ENCODE measurements at regions of chr4 and their contacts with region 1.

Region 1: DNA sequence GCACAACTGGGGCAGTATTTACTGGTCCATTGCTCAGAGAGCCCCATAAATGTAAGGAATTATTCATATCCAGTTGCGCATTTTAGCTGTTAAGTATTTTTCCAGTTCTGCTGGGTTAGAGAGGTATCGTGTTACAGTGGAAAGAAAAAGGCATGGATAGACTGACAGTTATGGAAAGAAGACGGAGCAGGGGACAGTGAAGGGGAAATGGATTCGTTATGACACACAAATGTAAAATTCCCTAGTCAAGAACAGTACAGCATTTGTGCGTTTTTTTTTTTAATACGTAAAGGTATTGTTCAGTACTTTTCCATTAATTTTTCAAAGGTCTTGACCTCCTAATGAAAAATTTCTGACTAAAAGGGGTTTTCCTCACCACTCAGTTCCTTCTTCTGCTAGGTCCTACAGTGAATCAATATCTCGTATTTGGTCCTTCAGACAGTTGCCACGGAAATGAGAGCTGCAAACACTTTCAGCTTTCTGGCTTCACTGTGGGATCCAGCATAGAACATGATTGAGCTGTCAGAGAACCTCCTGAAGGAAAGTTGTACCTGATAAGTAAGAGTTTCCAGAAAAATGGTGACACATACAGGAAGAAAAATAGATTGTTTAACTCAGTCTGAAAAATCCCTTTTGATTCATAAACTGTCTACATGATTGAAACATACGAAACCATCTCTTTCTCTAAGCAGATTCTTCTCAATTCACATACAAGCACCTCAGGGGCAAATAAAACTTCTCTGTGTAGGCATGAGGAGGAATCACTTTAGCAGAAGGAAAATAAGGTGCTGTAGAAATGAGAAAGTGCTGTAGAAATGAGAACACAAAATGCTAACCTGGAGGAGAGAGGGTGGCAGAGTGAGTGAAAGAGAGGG is 21.8 kb upstream of the BBS12 start:
- DNase-seq: peak; percentile 79
- H3K4me3 Mint-ChIP-seq: peak overlapping the region; percentile 54
- H3K27ac Mint-ChIP-seq: peak overlapping the region; percentile 96
- H3K4me1 Mint-ChIP-seq: peaks cover 80% of the 10 kb centered on the region
- H3K27me3 Mint-ChIP-seq: no peaks in the 10 kb centered on the region

Region 2: GRCh38 chr4:122364700-122365404 is 345.8 kb before region 1 on chr4:
- CTCF ChIA-PET with region 1: no interaction called
- intact Hi-C with region 1: no loop called
- DNase-seq: no peak
- H3K4me3 Mint-ChIP-seq: no peak overlapping the region
- H3K27ac Mint-ChIP-seq: no peak overlapping the region
- H3K4me1 Mint-ChIP-seq: no peaks in the 10 kb centered on the region
- H3K27me3 Mint-ChIP-seq: no peaks in the 10 kb centered on the region

Region 3: DNA sequence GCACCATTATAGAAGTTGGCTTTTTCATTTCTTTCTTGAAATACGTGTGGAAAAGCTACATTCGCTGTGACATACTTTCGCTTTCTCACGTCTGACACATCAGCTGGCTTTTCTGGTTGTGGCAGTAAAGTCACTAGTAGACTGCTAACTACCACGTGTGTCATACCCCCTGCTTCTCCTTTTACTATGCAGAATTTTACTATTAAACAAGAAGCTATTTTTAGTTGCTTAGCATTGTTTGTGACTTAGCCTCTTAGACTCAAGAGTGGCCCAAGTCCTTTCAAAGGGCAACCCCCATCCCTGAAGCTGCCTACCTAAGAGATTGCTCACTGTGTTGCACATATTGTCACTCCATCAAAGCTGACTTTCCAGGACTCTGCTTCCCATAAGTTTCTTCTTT is 252.0 kb before region 1 on chr4:
- CTCF ChIA-PET with region 1: interaction called, 4 read pairs
- intact Hi-C with region 1: loop called (anchors 1 kb)
- DNase-seq: peak; percentile 82
- H3K4me3 Mint-ChIP-seq: peak overlapping the region; percentile 68
- H3K27ac Mint-ChIP-seq: peak overlapping the region; percentile 99
- H3K4me1 Mint-ChIP-seq: peaks cover 43% of the 10 kb centered on the region
- H3K27me3 Mint-ChIP-seq: no peaks in the 10 kb centered on the region

Region 4: DNA sequence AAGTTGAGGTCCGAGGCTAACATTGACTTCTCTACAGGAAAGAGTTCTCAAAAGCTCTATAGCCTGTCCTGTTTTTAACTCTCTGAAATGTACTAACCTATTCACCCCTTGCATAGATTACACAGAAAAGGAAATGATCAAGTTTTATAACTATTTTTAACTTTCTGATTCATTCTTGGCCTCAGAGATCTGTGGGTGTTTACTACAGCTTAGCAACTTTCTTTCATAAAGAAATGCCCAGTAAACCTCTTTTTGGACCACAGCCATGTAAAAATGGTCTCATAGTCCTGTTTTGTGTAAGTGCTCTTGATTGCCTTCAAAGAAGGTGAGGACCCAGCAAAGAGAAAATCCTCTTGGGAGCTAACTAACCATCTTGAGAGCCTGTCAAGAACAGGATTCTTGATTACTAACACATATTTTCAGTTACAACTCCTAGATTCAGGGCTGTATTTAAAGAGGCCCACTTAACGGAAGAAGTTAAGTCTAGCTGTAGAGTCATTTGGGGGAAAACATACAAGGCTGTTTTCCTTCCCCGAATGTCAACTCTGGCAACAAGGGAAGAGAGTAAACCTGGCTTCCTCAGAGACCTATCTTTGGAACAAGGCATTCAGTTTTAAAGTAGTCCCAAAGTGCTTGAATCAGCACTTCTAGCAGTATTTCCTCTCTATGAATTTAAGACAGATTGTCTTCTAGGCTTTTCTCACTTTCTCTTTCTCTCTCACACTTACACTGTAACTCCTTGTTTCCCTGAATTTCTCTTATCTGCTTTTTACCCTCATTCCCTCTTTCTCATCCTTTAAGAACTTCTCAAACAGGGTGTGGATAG is 168.0 kb before region 1 on chr4:
- CTCF ChIA-PET with region 1: no interaction called
- intact Hi-C with region 1: loop called (anchors 1 kb)
- DNase-seq: no peak
- H3K4me3 Mint-ChIP-seq: peak overlapping the region; percentile 52
- H3K27ac Mint-ChIP-seq: peak overlapping the region; percentile 100
- H3K4me1 Mint-ChIP-seq: peaks cover 94% of the 10 kb centered on the region
- H3K27me3 Mint-ChIP-seq: no peaks in the 10 kb centered on the region

Region 5: DNA sequence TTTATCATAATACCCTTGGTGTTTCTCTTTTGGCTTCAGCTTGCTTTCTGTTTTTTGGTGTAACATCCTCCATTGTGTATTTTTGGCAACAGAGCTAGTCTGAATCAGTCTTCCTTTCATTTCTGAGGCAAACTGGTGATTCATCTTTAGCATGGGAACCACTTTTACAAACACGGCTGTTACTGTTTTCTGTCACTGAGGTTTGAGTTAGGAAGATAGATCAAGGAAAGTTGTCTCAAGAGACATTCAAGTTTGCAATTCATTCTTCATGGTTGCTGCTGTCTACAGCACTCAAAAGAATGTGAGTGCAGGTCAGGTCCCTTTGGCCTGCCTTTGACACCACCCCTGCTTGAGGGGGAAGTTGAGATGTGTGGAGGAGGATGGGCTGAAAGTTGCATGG is 126.2 kb before region 1 on chr4:
- CTCF ChIA-PET with region 1: interaction called, 3 read pairs
- intact Hi-C with region 1: loop called (anchors 1 kb)
- DNase-seq: peak; percentile 42
- H3K4me3 Mint-ChIP-seq: peak overlapping the region; percentile 50
- H3K27ac Mint-ChIP-seq: peak overlapping the region; percentile 100
- H3K4me1 Mint-ChIP-seq: peaks cover 65% of the 10 kb centered on the region
- H3K27me3 Mint-ChIP-seq: no peaks in the 10 kb centered on the region

Region 6: GRCh38 chr4:122689972-122690371 is 20.7 kb before region 1 on chr4:
- CTCF ChIA-PET with region 1: no interaction called
- intact Hi-C with region 1: loop called (anchors 1 kb)
- DNase-seq: no peak
- H3K4me3 Mint-ChIP-seq: no peak overlapping the region
- H3K27ac Mint-ChIP-seq: no peak overlapping the region
- H3K4me1 Mint-ChIP-seq: peaks cover 53% of the 10 kb centered on the region
- H3K27me3 Mint-ChIP-seq: peaks cover 2% of the 10 kb centered on the region

Region 7: DNA sequence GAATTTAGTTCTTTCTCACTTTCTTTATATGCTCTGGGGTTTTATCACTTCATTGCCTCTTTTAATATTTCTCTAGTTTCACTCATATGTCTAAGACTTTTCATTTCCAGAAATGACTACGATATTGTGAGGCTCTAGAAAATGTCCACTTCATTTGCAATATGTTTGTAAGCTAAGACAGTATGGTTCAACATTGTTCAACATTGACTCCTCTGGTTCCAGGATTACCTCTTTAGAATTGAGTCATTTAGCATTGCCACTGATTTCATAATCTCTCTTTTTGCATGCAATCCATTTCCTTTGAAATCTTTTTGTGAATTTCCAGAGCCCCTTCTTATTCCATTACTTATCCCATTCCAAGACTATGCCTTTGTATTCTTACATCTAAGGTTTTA is 54.1 kb after region 1 on chr4:
- CTCF ChIA-PET with region 1: no interaction called
- intact Hi-C with region 1: loop called (anchors 1 kb)
- DNase-seq: no peak
- H3K4me3 Mint-ChIP-seq: no peak overlapping the region
- H3K27ac Mint-ChIP-seq: peak overlapping the region; percentile 50
- H3K4me1 Mint-ChIP-seq: peaks cover 30% of the 10 kb centered on the region
- H3K27me3 Mint-ChIP-seq: no peaks in the 10 kb centered on the region

Measured in activated naive CD4-positive, alpha-beta T cell treated with anti-CD3 and anti-CD28 coated beads for 36 hours (primary cell).